ENCODE measurements at regions of chr11 and their contacts with region 1.

Region 1: DNA sequence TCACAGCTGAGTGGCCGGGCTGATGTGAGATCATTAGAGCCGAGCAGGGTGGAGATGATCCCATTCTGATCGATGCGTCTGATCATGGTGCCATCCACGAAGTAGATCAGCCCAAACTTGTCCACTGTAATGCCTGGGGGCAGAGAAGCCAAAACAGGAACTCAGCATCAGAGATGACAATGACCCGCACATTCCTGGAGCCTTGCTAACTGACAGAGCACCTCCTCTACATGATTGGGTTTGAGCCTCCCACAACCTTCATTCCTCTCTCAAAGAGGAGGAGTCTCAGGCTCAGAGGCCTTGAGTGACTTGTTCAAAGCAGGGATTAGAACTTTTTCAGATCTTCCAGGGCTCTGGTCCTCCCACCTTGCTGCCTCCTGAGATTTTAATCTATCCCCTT is 133.7 kb upstream of the NARS2 start:
- DNase-seq: peak; percentile 39
- ATAC-seq: peak; percentile 81
- H3K4me3 ChIP-seq: no peak overlapping the region
- H3K27ac ChIP-seq: no peak overlapping the region
- H3K4me1 ChIP-seq: no peaks in the 10 kb centered on the region
- H3K27me3 ChIP-seq: no peaks in the 10 kb centered on the region
- CTCF ChIP-seq: no peak
- POLR2A ChIP-seq: no peak
- RAD21 ChIP-seq: no peak

Region 2: DNA sequence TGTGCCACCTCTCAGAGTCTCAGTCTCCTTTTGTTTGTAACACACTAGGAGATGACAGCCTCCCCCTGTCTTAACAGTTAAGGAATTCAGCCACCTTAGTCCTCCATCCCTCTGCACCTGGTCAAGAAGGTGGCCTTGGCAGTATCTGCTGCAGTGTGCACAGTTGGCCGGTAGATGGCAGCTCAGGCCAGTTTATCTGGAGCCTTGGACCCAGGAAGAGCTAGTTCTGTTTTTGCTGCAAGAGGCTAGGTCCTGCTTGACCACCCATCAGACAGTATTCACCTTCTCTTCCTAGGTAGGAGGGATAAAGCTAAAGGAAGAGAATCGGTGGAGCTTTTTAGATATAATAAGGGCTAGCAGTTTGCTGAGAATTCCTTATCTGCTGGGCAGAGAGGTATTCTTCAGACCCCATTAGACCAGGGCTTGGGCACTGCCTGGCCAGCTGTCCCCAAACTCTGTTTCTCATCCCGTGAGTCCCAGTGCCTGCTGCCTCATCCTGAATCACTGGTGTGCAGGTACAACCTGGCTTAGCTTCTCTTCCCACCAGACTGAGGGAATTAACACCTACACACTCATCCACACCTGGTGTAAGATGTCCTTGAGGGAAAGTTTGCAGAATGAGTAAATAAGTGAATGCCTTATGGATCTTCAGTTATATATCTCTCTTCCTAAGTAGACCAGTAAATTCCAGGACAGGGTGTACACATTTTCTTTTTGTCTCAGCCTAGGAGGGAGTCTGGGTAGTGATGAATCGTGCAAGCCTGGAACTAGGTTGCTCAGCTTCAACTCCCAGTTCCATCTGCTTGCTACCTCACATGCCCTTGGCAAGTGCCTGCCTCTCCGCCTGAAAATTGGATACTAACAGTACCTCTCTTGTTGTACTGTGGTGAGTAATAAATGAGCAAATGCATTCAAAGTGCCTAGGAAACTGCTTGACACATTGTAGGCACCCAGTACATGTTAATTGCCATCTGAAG is 62.9 kb before region 1 on chr11:
- CTCF ChIA-PET with region 1: no interaction called
- POLR2A ChIA-PET with region 1: no interaction called
- dilution Hi-C with region 1: no loop called
- in situ Hi-C with region 1: no loop called
- intact Hi-C with region 1: no loop called
- DNase-seq: peak; percentile 72
- ATAC-seq: peak; percentile 95
- H3K4me3 ChIP-seq: no peak overlapping the region
- H3K27ac ChIP-seq: no peak overlapping the region
- H3K4me1 ChIP-seq: peaks cover 7% of the 10 kb centered on the region; the same call in 1 of the 2 replicates
- H3K27me3 ChIP-seq: no peaks in the 10 kb centered on the region
- CTCF ChIP-seq: peak; percentile 90
- POLR2A ChIP-seq: peak; percentile 2; the same call in 1 of the 2 replicates
- RAD21 ChIP-seq: peak; percentile 95

Region 3: DNA sequence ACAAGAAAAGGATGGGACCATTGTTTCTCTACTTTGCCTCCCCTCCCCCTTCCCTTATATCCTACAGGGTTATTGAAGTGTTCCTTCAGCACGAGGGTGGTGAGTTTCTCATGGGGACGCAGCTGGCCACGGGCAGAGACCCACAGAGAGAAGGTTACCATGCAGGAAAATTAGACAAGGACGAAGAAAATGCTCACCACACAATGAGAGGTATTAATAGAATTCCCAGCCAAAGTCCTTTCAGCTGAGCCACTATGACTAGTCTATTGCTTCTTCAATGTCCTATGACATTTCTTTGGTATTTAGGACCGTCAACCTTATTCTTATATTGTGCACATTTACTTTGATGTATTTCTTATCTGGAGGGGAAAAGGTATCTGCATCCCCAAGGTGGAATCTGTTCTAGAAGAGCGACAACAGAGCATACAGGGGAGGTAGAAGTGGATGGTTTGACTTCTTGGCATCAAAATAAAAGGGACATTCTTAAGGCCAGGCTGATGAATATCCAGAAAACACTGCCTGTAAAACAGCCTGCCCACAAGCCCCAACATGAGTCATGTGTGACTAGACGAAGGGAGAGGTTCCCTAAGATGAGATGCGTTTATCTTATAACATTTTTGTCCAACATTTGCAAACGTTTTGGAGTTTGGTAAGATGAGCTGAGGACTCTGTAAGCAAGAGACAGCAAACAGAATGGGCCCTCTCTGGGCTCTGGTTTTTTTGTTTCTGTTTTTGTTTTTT is 76.1 kb after region 1 on chr11:
- CTCF ChIA-PET with region 1: no interaction called
- POLR2A ChIA-PET with region 1: interaction called, 10 read pairs
- dilution Hi-C with region 1: no loop called
- in situ Hi-C with region 1: no loop called
- intact Hi-C with region 1: no loop called
- DNase-seq: peak; percentile 95
- ATAC-seq: peak; percentile 84
- H3K4me3 ChIP-seq: no peak overlapping the region
- H3K27ac ChIP-seq: peak overlapping the region; percentile 93
- H3K4me1 ChIP-seq: peaks cover 29% of the 10 kb centered on the region
- H3K27me3 ChIP-seq: no peaks in the 10 kb centered on the region
- CTCF ChIP-seq: no peak
- POLR2A ChIP-seq: no peak
- RAD21 ChIP-seq: no peak

Measured in IMR-90 (cell line).